CD8-positive, alpha-beta T cell (primary cell): ENCODE measurements at regions of chr3 and their contacts with region 1.

Region 1: GRCh38 chr3:142180761-142181362 is 31.5 kb upstream of the TFDP2 start:
- DNase-seq: peak in 8 of 9 experiments; percentile 6 to 59 (median 26)
- ATAC-seq: no peak
- H3K4me3 ChIP-seq: no peak overlapping the region
- H3K4me3 Mint-ChIP-seq: no peak overlapping the region
- H3K27ac ChIP-seq: no peak overlapping the region
- H3K27ac Mint-ChIP-seq: no peak overlapping the region
- H3K4me1 ChIP-seq: no peaks in the 10 kb centered on the region
- H3K4me1 Mint-ChIP-seq: no peaks in the 10 kb centered on the region
- H3K27me3 ChIP-seq: no peaks in the 10 kb centered on the region
- H3K27me3 Mint-ChIP-seq: no peaks in the 10 kb centered on the region
- CTCF ChIP-seq: no peak

Region 2: DNA sequence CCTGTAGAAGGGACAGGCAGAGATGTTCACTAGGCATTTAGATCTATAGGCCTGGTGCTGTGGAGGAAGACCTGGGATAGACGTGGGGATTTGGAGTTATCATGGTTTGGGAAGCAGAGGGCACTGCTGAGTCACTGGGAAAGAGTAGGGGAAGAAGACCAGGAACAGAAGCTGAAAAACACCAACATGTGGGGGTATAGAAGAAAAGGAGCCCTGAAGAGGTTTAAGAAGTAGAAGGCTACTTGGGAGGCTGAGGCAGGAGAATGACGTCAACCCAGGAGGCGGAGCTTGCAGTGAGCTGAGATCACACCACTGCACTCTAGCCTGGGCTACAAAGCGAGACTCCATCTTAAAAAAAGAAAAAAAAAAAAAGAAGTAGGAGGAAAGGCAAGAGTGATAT is 398.4 kb before region 1 on chr3:
- CTCF ChIA-PET with region 1: no interaction called
- POLR2A ChIA-PET with region 1: no interaction called
- intact Hi-C with region 1: no loop called
- DNase-seq: no peak
- ATAC-seq: no peak
- H3K4me3 ChIP-seq: no peak overlapping the region
- H3K4me3 Mint-ChIP-seq: no peak overlapping the region
- H3K27ac ChIP-seq: no peak overlapping the region
- H3K27ac Mint-ChIP-seq: no peak overlapping the region
- H3K4me1 ChIP-seq: no peaks in the 10 kb centered on the region
- H3K4me1 Mint-ChIP-seq: no peaks in the 10 kb centered on the region
- H3K27me3 ChIP-seq: no peaks in the 10 kb centered on the region
- H3K27me3 Mint-ChIP-seq: no peaks in the 10 kb centered on the region
- CTCF ChIP-seq: no peak

Region 3: GRCh38 chr3:142209655-142210054 is 28.8 kb after region 1 on chr3:
- CTCF ChIA-PET with region 1: no interaction called
- POLR2A ChIA-PET with region 1: no interaction called
- intact Hi-C with region 1: loop called in 1 of 2 experiments (anchors 1 kb)
- DNase-seq: no peak
- ATAC-seq: no peak
- H3K4me3 ChIP-seq: no peak overlapping the region
- H3K4me3 Mint-ChIP-seq: no peak overlapping the region
- H3K27ac ChIP-seq: no peak overlapping the region
- H3K27ac Mint-ChIP-seq: no peak overlapping the region
- H3K4me1 ChIP-seq: no peaks in the 10 kb centered on the region
- H3K4me1 Mint-ChIP-seq: no peaks in the 10 kb centered on the region
- H3K27me3 ChIP-seq: no peaks in the 10 kb centered on the region
- H3K27me3 Mint-ChIP-seq: no peaks in the 10 kb centered on the region
- CTCF ChIP-seq: no peak